ENCODE measurements at regions of chr2 and their contacts with region 1.

Region 1: DNA sequence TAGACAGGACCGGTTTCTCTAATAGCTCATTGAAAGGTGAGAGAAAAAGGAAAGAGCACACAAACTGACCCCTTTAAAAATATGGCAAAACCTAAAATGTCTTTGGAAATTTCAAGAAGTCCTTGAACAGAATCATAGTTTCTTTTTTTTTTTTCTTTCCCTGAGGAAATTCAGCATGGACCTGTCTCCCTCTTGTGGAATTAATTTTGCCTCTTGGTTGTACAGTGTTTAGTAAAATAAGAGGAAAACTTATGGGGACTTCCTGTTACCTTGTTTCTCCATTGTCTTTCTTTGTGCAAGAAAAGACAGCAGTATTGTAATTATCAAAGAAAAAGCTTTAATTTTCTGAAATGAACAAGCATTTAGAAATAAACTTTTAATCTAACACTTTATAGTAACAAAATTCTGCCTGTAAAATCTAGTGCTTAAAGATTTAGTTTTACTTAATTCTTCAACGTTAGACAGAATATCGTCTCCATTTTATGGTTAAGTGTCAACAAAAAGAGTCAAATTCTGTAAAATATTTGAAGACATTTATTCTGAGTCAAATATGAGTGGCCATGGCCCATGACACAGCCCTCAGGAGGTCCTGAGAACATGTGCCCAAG is 176.3 kb upstream of the NABP1 start:
- H3K4me3 Mint-ChIP-seq: no peak overlapping the region
- H3K27ac Mint-ChIP-seq: no peak overlapping the region
- H3K4me1 Mint-ChIP-seq: no peaks in the 10 kb centered on the region
- H3K27me3 Mint-ChIP-seq: no peaks in the 10 kb centered on the region

Region 2: DNA sequence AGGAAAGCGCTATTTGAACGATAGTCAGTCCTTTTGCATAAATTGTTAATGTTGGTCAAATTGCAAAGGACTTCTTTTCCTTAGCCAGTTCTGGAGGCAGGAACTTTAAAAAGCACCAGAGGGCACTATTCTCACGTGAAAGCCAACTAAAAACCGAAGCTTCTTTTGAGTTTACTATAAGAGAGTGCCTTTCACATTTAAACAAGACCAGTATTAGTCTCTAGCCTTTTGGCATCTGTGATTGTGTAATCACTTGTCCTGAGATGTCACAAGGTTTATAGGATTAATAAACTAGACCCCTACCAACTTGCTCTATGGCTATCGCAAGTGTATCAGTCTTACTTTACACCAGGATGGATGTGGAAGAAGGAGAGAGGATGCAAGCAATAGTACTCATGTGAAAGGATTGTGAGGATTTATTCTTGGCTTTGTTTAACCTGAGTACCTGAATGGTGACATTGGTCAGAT is 336.5 kb before region 1 on chr2:
- intact Hi-C with region 1: loop called (anchors 1 kb)
- H3K4me3 Mint-ChIP-seq: no peak overlapping the region
- H3K27ac Mint-ChIP-seq: no peak overlapping the region
- H3K4me1 Mint-ChIP-seq: no peaks in the 10 kb centered on the region
- H3K27me3 Mint-ChIP-seq: no peaks in the 10 kb centered on the region

Region 3: DNA sequence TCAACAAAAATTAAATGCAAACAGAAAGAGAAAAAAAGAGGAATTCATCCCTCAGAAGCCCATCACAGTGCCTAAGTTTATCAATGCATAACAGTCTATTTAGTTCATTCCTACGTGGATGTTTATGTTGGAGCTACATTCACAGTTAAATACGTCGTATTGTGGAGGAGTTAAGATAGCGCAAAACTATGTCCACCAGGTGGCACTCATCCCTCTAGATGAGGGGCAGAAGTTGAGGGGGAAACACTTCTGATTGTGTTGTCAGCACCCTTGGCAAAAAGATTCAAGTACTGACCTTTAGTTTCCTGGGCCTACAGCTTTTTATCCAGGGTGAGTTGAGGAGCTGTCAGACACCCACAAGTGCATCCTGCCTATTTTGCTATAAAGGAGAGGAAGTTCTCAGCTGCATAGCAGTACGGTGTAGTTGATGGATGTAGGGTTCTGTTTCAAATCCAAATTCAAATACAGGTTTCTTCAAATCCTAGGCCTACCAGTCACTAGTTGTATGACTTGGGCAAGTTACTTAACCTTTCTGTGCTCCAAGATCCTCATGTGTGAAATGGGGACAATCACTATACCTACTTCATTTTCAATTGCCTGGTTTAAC is 283.3 kb before region 1 on chr2:
- intact Hi-C with region 1: loop called (anchors 1 kb)
- H3K4me3 Mint-ChIP-seq: no peak overlapping the region
- H3K27ac Mint-ChIP-seq: no peak overlapping the region
- H3K4me1 Mint-ChIP-seq: peaks cover 4% of the 10 kb centered on the region
- H3K27me3 Mint-ChIP-seq: no peaks in the 10 kb centered on the region

Region 4: DNA sequence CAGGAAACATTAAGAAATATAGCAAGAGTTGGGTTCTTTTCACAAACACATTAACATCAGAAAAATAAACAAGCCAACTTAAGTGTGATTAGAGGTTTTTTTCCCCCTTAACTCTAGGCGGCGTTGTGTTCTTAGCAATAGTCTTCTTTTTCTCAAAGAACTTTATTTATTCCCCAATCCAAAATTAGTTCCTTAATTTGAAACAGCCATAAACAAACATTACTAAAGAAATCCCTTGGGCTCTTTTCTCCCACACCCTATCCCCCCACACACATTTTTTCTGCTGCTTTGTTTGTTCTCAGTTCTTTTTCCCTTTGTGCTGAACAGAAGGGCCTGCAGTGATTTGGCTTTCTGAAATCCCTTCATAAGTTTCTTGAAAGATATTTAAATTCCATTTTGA is 269.7 kb before region 1 on chr2:
- intact Hi-C with region 1: loop called (anchors 5 kb)
- H3K4me3 Mint-ChIP-seq: no peak overlapping the region
- H3K27ac Mint-ChIP-seq: no peak overlapping the region
- H3K4me1 Mint-ChIP-seq: no peaks in the 10 kb centered on the region
- H3K27me3 Mint-ChIP-seq: no peaks in the 10 kb centered on the region